ENCODE measurements at regions of chr10 and their contacts with region 1.

Region 1: GRCh38 chr10:23742368-23742767 is 303.5 kb downstream of the OTUD1 start:
- DNase-seq: peak; percentile 57
- H3K4me3 Mint-ChIP-seq: no peak overlapping the region
- H3K27ac Mint-ChIP-seq: no peak overlapping the region
- H3K4me1 Mint-ChIP-seq: peaks cover 9% of the 10 kb centered on the region
- H3K27me3 Mint-ChIP-seq: peaks cover 24% of the 10 kb centered on the region

Region 2: DNA sequence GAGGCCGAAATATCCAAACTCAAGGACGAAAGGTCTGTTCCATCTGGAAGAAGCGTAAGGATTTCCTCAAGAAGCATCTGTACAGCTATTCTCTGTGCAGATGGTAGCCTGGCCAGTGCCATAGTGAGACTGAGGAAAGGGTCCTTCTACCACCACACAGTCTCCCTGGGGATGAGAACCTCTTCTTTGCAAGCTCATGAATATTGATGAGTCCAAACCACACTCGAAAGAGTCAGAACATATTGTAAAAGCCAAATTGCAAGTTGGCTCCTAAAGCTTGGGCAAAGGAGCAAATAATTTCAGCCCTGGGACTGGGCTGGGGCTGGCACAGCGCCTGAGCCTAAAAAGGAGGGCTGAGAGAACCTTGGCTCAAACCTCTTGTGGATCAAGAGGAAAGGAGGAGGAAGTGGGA is 961.9 kb before region 1 on chr10:
- CTCF ChIA-PET with region 1: no interaction called
- intact Hi-C with region 1: no loop called
- DNase-seq: no peak
- H3K4me3 Mint-ChIP-seq: no peak overlapping the region
- H3K27ac Mint-ChIP-seq: no peak overlapping the region
- H3K4me1 Mint-ChIP-seq: peaks cover 4% of the 10 kb centered on the region
- H3K27me3 Mint-ChIP-seq: no peaks in the 10 kb centered on the region

Region 3: DNA sequence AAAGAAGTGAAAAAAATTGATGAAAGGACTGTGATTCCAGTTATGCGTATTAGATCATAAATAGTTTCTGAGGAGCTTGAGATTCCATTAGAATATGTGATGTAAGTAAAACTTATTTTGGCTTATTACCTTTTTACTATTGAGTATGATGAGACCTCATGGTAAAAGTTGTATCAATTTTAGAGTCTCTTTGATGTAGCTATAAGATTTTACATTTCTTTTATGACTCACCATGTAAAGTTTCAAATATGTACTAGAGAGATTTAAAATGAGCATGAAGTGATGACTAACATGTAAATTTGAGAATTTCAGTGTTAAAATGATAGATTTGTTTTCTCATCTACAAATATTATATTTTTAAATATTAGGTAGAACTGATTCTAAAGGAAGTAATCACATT is 27.0 kb before region 1 on chr10:
- CTCF ChIA-PET with region 1: no interaction called
- intact Hi-C with region 1: loop called (anchors 1 kb)
- DNase-seq: no peak
- H3K4me3 Mint-ChIP-seq: no peak overlapping the region
- H3K27ac Mint-ChIP-seq: no peak overlapping the region
- H3K4me1 Mint-ChIP-seq: peaks cover 12% of the 10 kb centered on the region
- H3K27me3 Mint-ChIP-seq: peaks cover 28% of the 10 kb centered on the region

Measured in activated naive CD4-positive, alpha-beta T cell treated with anti-CD3 and anti-CD28 coated beads for 36 hours (primary cell).